HEK293 (cell line): ENCODE measurements at regions of chr2 and their contacts with region 1.

Region 1: DNA sequence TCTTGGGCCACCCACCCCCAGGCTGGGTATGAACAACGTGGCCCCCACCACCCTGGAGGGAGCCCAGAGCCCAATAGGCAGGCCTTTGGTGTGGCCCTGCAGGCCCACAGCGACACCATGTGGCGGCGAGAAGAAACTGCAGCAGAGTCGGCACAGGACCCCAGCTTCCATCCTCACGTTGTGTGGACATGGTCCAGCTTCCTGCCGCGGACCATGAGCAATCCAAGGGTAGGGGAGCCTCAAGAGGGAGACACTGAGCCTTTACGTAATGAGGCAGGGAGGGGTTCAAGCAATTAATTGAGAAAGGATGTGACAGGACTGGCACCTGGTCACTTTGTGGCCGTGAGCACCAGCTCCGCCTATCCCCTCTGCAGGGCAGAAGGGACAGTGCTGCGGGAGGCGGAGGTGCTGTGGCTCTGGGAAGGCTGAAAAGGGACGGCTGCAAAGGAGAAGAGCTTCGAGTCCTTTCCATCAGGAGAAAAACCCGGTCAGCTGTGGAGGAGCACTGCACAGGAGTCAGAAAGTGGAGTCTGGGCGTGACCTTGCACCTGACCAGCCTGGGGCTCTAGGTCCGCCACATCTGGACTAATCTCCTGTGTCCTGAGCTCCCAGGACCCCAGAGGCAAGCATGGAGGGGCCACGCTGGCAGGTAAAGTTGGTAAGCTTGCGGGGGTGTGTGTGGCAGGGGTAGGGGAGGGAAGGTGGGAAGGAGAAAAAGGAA is 44.8 kb downstream of the TMEM37 start:
- H3K4me3 ChIP-seq: no peak overlapping the region
- H3K27ac ChIP-seq: no peak overlapping the region
- H3K4me1 ChIP-seq: no peaks in the 10 kb centered on the region
- CTCF ChIP-seq: peak; percentile 95

Region 2: GRCh38 chr2:119218478-119219064 is 257.9 kb before region 1 on chr2:
- CTCF ChIA-PET with region 1: interaction called, 20 read pairs
- POLR2A ChIA-PET with region 1: no interaction called
- H3K4me3 ChIP-seq: no peak overlapping the region
- H3K27ac ChIP-seq: peak overlapping the region; percentile 11; the same call in 1 of the 2 replicates
- H3K4me1 ChIP-seq: peaks cover 13% of the 10 kb centered on the region
- CTCF ChIP-seq: peak; percentile 92

Region 3: DNA sequence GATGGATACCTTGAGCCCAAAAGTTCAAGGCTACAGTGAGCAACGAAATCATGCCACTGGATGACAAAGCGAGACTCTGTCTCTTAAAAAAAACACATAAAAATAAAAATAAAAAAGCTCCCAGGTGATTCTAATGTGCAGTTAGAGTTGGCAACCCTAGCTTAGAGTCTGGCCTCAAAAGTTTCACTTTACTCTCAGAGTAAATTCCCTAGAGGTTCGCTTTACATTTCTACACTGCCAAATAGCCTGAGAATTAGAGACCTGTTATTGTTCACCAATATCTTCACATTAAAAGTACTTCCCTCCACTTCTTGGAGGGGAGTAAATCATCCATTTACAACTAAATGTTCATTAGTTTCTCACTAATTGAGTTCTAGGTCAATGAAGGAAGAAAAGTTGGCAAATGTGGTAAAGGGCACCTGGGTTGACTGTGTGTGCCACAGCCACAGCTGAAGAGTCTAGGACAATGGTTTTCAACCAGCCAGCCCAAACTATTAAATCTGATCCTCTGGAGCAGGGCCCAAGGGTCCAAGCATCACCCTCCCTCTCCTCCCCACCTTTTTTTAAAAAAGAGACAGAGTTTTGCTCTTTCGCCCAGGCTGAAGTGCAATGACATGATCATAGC is 60.0 kb before region 1 on chr2:
- CTCF ChIA-PET with region 1: interaction called, 64 read pairs
- POLR2A ChIA-PET with region 1: no interaction called
- H3K4me3 ChIP-seq: no peak overlapping the region
- H3K27ac ChIP-seq: no peak overlapping the region
- H3K4me1 ChIP-seq: no peaks in the 10 kb centered on the region
- CTCF ChIP-seq: no peak

Region 4: DNA sequence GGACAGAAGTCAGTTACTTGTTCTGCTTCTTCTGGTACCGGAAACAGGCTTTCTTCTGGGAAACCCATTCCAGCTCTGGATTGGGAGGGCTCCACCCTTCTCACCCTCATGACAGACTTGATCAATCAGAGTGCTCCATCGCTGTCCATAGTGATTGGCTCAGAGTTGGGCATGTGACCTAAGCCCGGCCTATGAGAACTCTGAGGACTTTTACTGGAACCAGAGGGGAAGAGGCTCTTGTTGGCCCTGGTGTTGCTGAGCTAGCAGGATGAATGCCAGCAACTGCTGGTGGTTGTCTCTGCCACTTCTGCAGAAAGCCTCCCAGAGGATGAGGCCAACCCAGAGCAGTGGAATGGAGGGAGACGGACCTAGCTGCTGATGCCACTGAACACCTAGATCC is 11.5 kb before region 1 on chr2:
- CTCF ChIA-PET with region 1: interaction called, 20 read pairs
- POLR2A ChIA-PET with region 1: no interaction called
- H3K4me3 ChIP-seq: no peak overlapping the region
- H3K27ac ChIP-seq: no peak overlapping the region
- H3K4me1 ChIP-seq: peaks cover 2% of the 10 kb centered on the region; the same call in 1 of the 2 replicates
- CTCF ChIP-seq: no peak

Region 5: GRCh38 chr2:119494163-119494790 is 17.8 kb after region 1 on chr2:
- CTCF ChIA-PET with region 1: interaction called, 18 read pairs
- POLR2A ChIA-PET with region 1: no interaction called
- H3K4me3 ChIP-seq: no peak overlapping the region
- H3K27ac ChIP-seq: no peak overlapping the region
- H3K4me1 ChIP-seq: no peaks in the 10 kb centered on the region
- CTCF ChIP-seq: no peak

Region 6: GRCh38 chr2:119638685-119639554 is 162.5 kb after region 1 on chr2:
- CTCF ChIA-PET with region 1: no interaction called
- POLR2A ChIA-PET with region 1: no interaction called
- H3K4me3 ChIP-seq: no peak overlapping the region
- H3K27ac ChIP-seq: no peak overlapping the region
- H3K4me1 ChIP-seq: no peaks in the 10 kb centered on the region
- CTCF ChIP-seq: no peak